ENCODE measurements at regions of chr13 and their contacts with region 1.

Region 1: DNA sequence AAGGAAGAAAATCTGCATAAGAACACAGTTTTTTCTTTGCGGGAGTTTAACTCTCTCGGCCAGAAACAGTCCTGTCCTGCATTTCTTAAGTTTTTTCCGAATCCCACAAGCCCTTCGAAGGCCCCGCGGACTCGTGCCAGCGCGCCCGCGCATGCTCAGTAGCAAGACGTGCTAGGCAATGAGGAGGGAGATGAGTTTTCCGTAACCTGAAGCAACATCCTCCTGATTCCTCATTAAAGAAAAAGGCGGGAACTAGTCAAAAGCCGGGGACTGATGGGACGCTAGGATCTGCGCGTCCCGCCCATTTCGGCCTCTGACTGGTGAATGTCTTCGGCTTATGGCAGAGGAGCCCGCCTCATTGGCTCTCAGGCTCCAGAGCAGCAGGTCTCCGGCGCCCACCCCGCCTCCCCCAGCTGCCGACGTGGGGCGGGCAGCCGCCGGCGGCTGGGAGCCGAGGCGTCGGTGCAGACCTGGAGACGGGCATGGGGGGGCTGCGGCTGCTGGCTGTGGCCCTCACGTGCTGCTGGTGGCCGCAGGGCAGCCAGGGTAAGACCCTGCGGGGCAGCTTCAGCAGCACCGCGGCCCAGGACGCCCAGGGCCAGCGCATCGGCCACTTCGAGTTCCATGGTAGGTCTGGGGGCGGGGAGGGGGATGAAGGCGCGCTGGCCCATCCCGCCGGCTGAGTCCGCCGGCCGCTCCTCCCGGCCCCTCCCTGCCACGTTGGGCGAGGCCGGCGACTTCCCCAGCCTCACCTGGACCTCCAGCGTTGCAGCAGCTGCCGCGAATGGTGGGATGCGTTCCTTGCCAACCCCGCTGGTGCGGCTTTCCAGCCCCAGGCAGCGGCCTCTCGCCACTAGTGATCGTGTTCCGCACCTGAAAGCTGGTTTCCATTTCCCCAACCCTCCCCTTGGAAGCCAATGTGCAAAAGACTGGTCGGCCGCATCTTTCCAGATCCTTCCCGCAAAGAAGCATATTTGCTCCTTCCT is at the start of gene GPR180:
- DNase-seq: peak; percentile 95
- ATAC-seq: peak; percentile 99
- H3K4me3 Mint-ChIP-seq: peak within 1 kb of the TSS; percentile 78
- H3K27ac Mint-ChIP-seq: peak within 1 kb of the TSS; percentile 45; the same call in 1 of the 2 replicates
- H3K4me1 Mint-ChIP-seq: peaks cover 8% of the 10 kb centered on the region
- H3K27me3 Mint-ChIP-seq: peaks cover 24% of the 10 kb centered on the region
- CTCF ChIP-seq: no peak
- total RNA-seq, gene GPR180: 4.5 to 5.0 TPM (median 5.0 TPM) in 3 replicates

Region 2: DNA sequence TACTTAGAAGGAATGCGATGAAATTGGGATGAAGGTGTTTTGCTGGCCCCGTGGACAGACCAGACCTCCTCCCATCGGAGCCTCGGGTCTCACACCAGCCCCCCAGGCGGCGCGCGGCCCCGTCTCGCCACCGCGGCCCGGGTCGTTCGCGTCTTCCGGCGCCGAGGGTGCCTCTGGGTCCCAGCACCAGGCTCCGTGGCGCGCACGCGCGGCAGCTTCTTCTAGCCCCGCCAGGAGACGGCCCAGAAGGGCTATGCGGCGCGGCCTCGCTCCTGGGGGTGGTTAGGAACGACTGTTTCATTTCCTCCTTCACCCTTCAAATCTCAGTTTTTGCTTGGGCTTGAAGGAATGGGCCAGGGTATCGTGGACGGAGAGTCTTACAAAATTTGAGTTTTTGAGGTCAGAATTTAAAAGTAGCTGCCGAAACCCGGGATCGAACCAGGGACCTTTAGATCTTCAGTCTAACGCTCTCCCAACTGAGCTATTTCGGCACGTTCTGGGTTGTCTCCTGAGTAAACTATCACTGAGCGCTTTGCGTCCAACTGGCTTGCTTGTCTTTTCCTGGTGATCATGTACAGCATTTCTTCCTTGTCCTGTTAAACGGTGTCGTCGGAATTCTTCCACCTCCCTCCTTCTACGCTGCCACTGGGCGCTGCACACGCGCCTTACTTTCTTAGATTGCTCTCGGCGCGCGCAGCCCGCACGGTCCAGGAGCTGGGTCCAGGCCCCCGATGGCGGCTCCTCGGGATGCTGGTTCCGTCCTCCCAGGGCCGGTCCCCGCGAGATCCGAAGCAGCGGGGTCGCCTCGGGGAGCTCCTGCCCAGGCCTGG is 52.3 kb before region 1 on chr13:
- CTCF ChIA-PET with region 1: interaction called, 4 read pairs
- POLR2A ChIA-PET with region 1: interaction called, 11 read pairs
- DNase-seq: peak; percentile 88
- ATAC-seq: peak; percentile 74
- H3K4me3 Mint-ChIP-seq: peak overlapping the region; percentile 83
- H3K27ac Mint-ChIP-seq: peak overlapping the region; percentile 91
- H3K4me1 Mint-ChIP-seq: peaks cover 36% of the 10 kb centered on the region
- H3K27me3 Mint-ChIP-seq: peaks cover 17% of the 10 kb centered on the region
- CTCF ChIP-seq: no peak

Measured in WTC11 (cell line).